ENCODE measurements at regions of chr7 and their contacts with region 1.

Region 1: GRCh38 chr7:74401137-74401859 is 52.4 kb upstream of the GTF2IRD1 start:
- DNase-seq: no peak
- H3K4me3 ChIP-seq: no peak overlapping the region
- H3K27ac ChIP-seq: no peak overlapping the region
- H3K4me1 ChIP-seq: no peaks in the 10 kb centered on the region
- H3K27me3 ChIP-seq: no peaks in the 10 kb centered on the region
- CTCF ChIP-seq: peak in 2 of 3 experiments; percentile 95 to 97
- EP300 ChIP-seq: no peak
- POLR2A ChIP-seq: no peak

Region 2: DNA sequence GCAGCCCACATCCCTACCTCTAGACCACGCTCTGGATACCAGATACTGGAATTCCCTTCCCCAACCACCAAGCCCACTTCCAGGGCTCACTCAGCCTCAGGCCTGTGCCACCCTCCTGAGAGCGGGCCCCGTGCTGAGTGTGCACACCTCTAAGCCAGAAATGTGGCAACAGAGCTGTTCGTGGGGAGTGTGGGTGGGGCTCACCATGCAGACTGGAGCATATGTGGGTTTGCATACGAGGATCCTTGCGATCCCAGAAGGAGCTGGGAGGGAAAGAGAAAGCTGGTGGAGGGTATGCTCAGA is 330.7 kb before region 1 on chr7:
- intact Hi-C with region 1: loop called (anchors 5 kb)
- DNase-seq: no peak
- H3K4me3 ChIP-seq: no peak overlapping the region
- H3K27ac ChIP-seq: no peak overlapping the region
- H3K4me1 ChIP-seq: peaks cover 0 to 3% (median 0%) of the 10 kb centered on the region in 4 donors
- H3K27me3 ChIP-seq: no peaks in the 10 kb centered on the region
- CTCF ChIP-seq: no peak
- EP300 ChIP-seq: no peak
- POLR2A ChIP-seq: no peak

Region 3: GRCh38 chr7:74187915-74188630 is 213.2 kb before region 1 on chr7:
- intact Hi-C with region 1: no loop called
- DNase-seq: no peak
- H3K4me3 ChIP-seq: no peak overlapping the region
- H3K27ac ChIP-seq: peak overlapping the region; percentile 8 to 77 (median 63)
- H3K4me1 ChIP-seq: peaks cover 55 to 61% (median 58%) of the 10 kb centered on the region in 4 donors
- H3K27me3 ChIP-seq: no peaks in the 10 kb centered on the region
- CTCF ChIP-seq: no peak
- EP300 ChIP-seq: no peak
- POLR2A ChIP-seq: no peak

Region 4: GRCh38 chr7:74206589-74207120 is 194.6 kb before region 1 on chr7:
- intact Hi-C with region 1: loop called (anchors 2 kb)
- DNase-seq: peak; percentile 97
- H3K4me3 ChIP-seq: peak overlapping the region; percentile 35 to 52 (median 44)
- H3K27ac ChIP-seq: no peak overlapping the region
- H3K4me1 ChIP-seq: peaks cover 7 to 29% (median 22%) of the 10 kb centered on the region in 4 donors
- H3K27me3 ChIP-seq: no peaks in the 10 kb centered on the region
- CTCF ChIP-seq: peak; percentile 96 to 99 (median 97)
- EP300 ChIP-seq: no peak
- POLR2A ChIP-seq: no peak

Region 5: GRCh38 chr7:74653686-74654181 is 252.4 kb after region 1 on chr7:
- intact Hi-C with region 1: no loop called
- DNase-seq: no peak
- H3K4me3 ChIP-seq: no peak overlapping the region
- H3K27ac ChIP-seq: no peak overlapping the region
- H3K4me1 ChIP-seq: peaks cover 8 to 25% (median 22%) of the 10 kb centered on the region in 4 donors
- H3K27me3 ChIP-seq: no peaks in the 10 kb centered on the region
- CTCF ChIP-seq: no peak
- EP300 ChIP-seq: no peak
- POLR2A ChIP-seq: no peak

Measured in esophagus muscularis mucosa (tissue), 4 donors.